Cardiac septum (tissue), 1 donor: ENCODE measurements at regions of chr3 and their contacts with region 1.

Region 1: GRCh38 chr3:149512209-149512782 is 37.8 kb downstream of the TM4SF4 start:
- DNase-seq: no peak

Region 2: GRCh38 chr3:149466192-149466591 is 46.1 kb before region 1 on chr3:
- intact Hi-C with region 1: no loop called
- DNase-seq: no peak

Region 3: GRCh38 chr3:149688112-149688757 is 175.9 kb after region 1 on chr3:
- intact Hi-C with region 1: no loop called
- DNase-seq: no peak

Region 4: GRCh38 chr3:149717391-149718056 is 205.2 kb after region 1 on chr3:
- intact Hi-C with region 1: loop called (anchors 1 kb)
- DNase-seq: no peak

Region 5: DNA sequence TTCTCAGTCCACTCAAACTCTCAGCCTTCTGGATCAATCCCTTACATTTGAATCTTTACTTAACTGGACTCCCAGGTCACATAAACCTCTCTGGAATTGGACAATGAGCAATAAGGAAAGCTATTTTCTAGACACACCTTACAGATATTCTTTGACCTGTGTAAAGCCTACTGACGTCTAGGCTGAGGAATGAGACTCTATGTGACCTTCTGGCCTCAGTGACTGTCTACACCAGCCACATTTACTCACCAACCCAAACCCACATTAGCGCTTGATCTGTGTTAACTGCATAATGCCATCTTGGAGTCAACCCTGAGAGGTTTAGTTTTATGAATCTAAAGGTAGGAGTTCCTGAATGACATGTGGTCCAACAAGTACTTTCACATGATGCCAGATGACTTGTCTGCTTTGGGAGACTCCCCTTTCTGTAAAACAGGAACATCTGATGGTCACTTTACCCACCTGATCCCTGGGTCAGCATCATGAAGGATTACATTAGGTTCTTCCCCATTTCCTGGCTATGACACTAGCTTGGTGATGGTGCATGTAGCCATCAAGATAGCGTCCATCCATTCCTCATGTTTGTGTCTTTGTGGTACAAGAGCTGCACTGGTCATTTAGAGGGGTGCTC is 251.4 kb after region 1 on chr3:
- intact Hi-C with region 1: no loop called
- DNase-seq: no peak